Caco-2 (cell line): ENCODE measurements at regions of chr4 and their contacts with region 1.

Region 1: GRCh38 chr4:76570141-76570973 is 135.3 kb downstream of the SHROOM3 start:
- DNase-seq: peak; percentile 73 to 76
- H3K4me3 ChIP-seq: no peak overlapping the region
- H3K4me3 Mint-ChIP-seq: peak overlapping the region; percentile 44
- H3K27ac Mint-ChIP-seq: peak overlapping the region; percentile 81
- H3K4me1 ChIP-seq: peaks cover 23% of the 10 kb centered on the region
- H3K4me1 Mint-ChIP-seq: peaks cover 44% of the 10 kb centered on the region
- H3K27me3 ChIP-seq: no peaks in the 10 kb centered on the region
- H3K27me3 Mint-ChIP-seq: no peaks in the 10 kb centered on the region
- CTCF ChIP-seq: no peak

Region 2: DNA sequence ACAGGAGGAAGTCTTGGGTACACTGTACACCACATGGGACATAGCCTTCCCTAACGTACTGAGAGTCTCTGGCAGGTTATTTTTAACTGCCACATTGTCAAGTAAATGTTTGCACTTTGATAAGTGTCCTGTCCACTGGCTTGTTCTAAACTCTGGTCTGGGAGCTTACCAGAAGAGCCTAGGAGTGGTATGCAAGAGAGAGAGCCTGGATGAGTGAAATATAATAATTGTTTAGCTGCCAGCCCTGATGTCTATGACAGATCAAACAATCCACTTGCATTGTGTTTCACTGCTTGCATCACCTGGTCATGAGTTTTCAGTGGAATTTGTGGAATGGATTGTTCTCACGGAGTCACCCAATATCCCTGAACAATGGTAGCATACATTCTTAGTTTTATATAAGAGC is 43.8 kb before region 1 on chr4:
- CTCF ChIA-PET with region 1: interaction called, 4 read pairs
- POLR2A ChIA-PET with region 1: no interaction called
- intact Hi-C with region 1: loop called (anchors 2 kb)
- DNase-seq: peak; percentile 57 to 59
- H3K4me3 ChIP-seq: no peak overlapping the region
- H3K4me3 Mint-ChIP-seq: peak overlapping the region; percentile 35
- H3K27ac Mint-ChIP-seq: peak overlapping the region; percentile 94
- H3K4me1 ChIP-seq: peaks cover 18% of the 10 kb centered on the region
- H3K4me1 Mint-ChIP-seq: peaks cover 35% of the 10 kb centered on the region
- H3K27me3 ChIP-seq: no peaks in the 10 kb centered on the region
- H3K27me3 Mint-ChIP-seq: no peaks in the 10 kb centered on the region
- CTCF ChIP-seq: no peak

Region 3: GRCh38 chr4:76546282-76547171 is 23.8 kb before region 1 on chr4:
- CTCF ChIA-PET with region 1: no interaction called
- POLR2A ChIA-PET with region 1: no interaction called
- intact Hi-C with region 1: loop called (anchors 2 kb)
- DNase-seq: no peak
- H3K4me3 ChIP-seq: no peak overlapping the region
- H3K4me3 Mint-ChIP-seq: no peak overlapping the region
- H3K27ac Mint-ChIP-seq: peak overlapping the region; percentile 69
- H3K4me1 ChIP-seq: peaks cover 25% of the 10 kb centered on the region
- H3K4me1 Mint-ChIP-seq: peaks cover 29% of the 10 kb centered on the region
- H3K27me3 ChIP-seq: no peaks in the 10 kb centered on the region
- H3K27me3 Mint-ChIP-seq: no peaks in the 10 kb centered on the region
- CTCF ChIP-seq: no peak

Region 4: GRCh38 chr4:76758290-76758882 is 188.0 kb after region 1 on chr4:
- CTCF ChIA-PET with region 1: interaction called, 12 read pairs
- POLR2A ChIA-PET with region 1: no interaction called
- intact Hi-C with region 1: no loop called
- DNase-seq: peak in 1 of 2 experiments; percentile 36
- H3K4me3 ChIP-seq: no peak overlapping the region
- H3K4me3 Mint-ChIP-seq: no peak overlapping the region
- H3K27ac Mint-ChIP-seq: no peak overlapping the region
- H3K4me1 ChIP-seq: no peaks in the 10 kb centered on the region; the same call in 1 of the 2 replicates
- H3K4me1 Mint-ChIP-seq: peaks cover 6% of the 10 kb centered on the region
- H3K27me3 ChIP-seq: no peaks in the 10 kb centered on the region
- H3K27me3 Mint-ChIP-seq: no peaks in the 10 kb centered on the region
- CTCF ChIP-seq: peak; percentile 57 to 65